Activated B cell treated with CpG ODN at 0.5 μM for 24 hours (primary cell): ENCODE measurements at regions of chr11 and their contacts with region 1.

Region 1: GRCh38 chr11:48109046-48109666 is 107.5 kb upstream of the OR4B1 start:
- DNase-seq: no peak
- ATAC-seq: peak; percentile 6
- H3K4me3 Mint-ChIP-seq: peak overlapping the region; percentile 75
- H3K27ac Mint-ChIP-seq: peak overlapping the region; percentile 88
- H3K4me1 Mint-ChIP-seq: peaks cover 77% of the 10 kb centered on the region
- H3K27me3 Mint-ChIP-seq: no peaks in the 10 kb centered on the region
- CTCF ChIP-seq: no peak

Region 2: DNA sequence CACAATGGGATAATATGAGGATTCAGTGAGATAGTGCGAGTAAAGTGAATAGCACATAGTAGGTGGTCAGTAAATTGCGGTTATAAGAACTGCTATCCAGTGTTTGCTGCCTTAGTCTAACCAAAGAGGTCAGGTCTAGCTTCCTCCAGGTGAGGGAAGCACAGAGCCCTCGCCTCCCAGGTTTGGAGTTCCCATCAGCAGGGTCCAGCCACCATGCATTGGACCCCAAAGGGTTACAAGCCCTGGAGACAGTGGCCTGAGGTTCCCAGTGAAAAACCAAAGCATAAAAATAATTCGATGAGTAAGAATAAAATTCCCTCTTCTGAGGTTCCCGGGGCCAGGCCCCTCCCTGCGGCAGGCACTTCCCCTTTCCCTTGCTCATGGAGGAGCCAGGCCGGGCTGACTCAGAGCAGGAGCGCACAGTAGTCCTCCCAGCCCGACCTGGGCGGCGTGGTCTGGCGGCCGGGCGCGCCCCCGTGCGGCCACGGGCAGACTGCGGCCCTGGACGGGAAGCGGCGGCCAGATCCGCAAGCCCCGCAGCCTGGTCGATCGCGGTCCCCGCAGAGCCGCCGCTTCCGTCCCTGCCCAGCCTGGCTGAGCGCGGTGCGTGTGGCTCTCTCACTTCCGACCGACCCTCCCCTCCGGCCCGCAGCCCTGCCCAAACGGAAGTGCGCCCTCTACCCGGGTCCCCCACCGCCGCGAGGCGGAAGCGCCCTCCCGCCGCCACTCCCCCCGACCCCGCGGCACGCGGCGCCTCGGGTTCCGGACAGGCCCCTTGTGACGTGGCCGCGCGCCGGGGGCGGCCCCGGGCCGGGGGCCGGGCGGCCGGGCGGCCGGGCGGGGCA is 701.2 kb before region 1 on chr11 and contains the start of gene SLC39A13:
- CTCF ChIA-PET with region 1: no interaction called
- POLR2A ChIA-PET with region 1: no interaction called
- intact Hi-C with region 1: loop called (anchors 2 kb)
- DNase-seq: peak; percentile 98
- ATAC-seq: peak; percentile 85
- H3K4me3 Mint-ChIP-seq: peak within 1 kb of the TSS; percentile 90
- H3K27ac Mint-ChIP-seq: peak within 1 kb of the TSS; percentile 95
- H3K4me1 Mint-ChIP-seq: peaks cover 24% of the 10 kb centered on the region
- H3K27me3 Mint-ChIP-seq: no peaks in the 10 kb centered on the region
- CTCF ChIP-seq: no peak
- total RNA-seq, gene SLC39A13: 27.5 and 28.2 TPM in 2 replicates

Region 3: GRCh38 chr11:47642099-47642855 is 466.9 kb before region 1 on chr11 and contains the start of gene MTCH2:
- CTCF ChIA-PET with region 1: no interaction called
- POLR2A ChIA-PET with region 1: no interaction called
- intact Hi-C with region 1: loop called (anchors 1 kb)
- DNase-seq: peak; percentile 95
- ATAC-seq: peak; percentile 94
- H3K4me3 Mint-ChIP-seq: peak within 1 kb of the TSS; percentile 94
- H3K27ac Mint-ChIP-seq: peak within 1 kb of the TSS; percentile 95
- H3K4me1 Mint-ChIP-seq: peaks cover 25% of the 10 kb centered on the region
- H3K27me3 Mint-ChIP-seq: no peaks in the 10 kb centered on the region
- CTCF ChIP-seq: no peak
- total RNA-seq, gene MTCH2: 73.3 and 81.7 TPM in 2 replicates

Region 4: GRCh38 chr11:47858169-47858543 is 251.0 kb before region 1 on chr11:
- CTCF ChIA-PET with region 1: interaction called, 30 read pairs
- POLR2A ChIA-PET with region 1: interaction called, 24 read pairs
- intact Hi-C with region 1: loop called (anchors 1 kb)
- DNase-seq: no peak
- ATAC-seq: no peak
- H3K4me3 Mint-ChIP-seq: peak overlapping the region; percentile 66
- H3K27ac Mint-ChIP-seq: peak overlapping the region; percentile 95
- H3K4me1 Mint-ChIP-seq: peaks cover 89% of the 10 kb centered on the region
- H3K27me3 Mint-ChIP-seq: no peaks in the 10 kb centered on the region
- CTCF ChIP-seq: no peak

Region 5: GRCh38 chr11:47941907-47942558 is 167.1 kb before region 1 on chr11:
- CTCF ChIA-PET with region 1: interaction called, 159 read pairs
- POLR2A ChIA-PET with region 1: interaction called, 55 read pairs
- intact Hi-C with region 1: no loop called
- DNase-seq: no peak
- ATAC-seq: no peak
- H3K4me3 Mint-ChIP-seq: no peak overlapping the region
- H3K27ac Mint-ChIP-seq: no peak overlapping the region
- H3K4me1 Mint-ChIP-seq: peaks cover 23% of the 10 kb centered on the region
- H3K27me3 Mint-ChIP-seq: no peaks in the 10 kb centered on the region
- CTCF ChIP-seq: no peak

Region 6: GRCh38 chr11:47971501-47971900 is 137.7 kb before region 1 on chr11:
- CTCF ChIA-PET with region 1: no interaction called
- POLR2A ChIA-PET with region 1: no interaction called
- intact Hi-C with region 1: no loop called
- DNase-seq: no peak
- ATAC-seq: no peak
- H3K4me3 Mint-ChIP-seq: no peak overlapping the region
- H3K27ac Mint-ChIP-seq: no peak overlapping the region
- H3K4me1 Mint-ChIP-seq: peaks cover 15% of the 10 kb centered on the region
- H3K27me3 Mint-ChIP-seq: no peaks in the 10 kb centered on the region
- CTCF ChIP-seq: no peak

Region 7: GRCh38 chr11:48013269-48013901 is 95.8 kb before region 1 on chr11:
- CTCF ChIA-PET with region 1: no interaction called
- POLR2A ChIA-PET with region 1: interaction called, 26 read pairs
- intact Hi-C with region 1: loop called (anchors 2 kb)
- DNase-seq: peak; percentile 48
- ATAC-seq: peak; percentile 88
- H3K4me3 Mint-ChIP-seq: peak overlapping the region; percentile 51
- H3K27ac Mint-ChIP-seq: peak overlapping the region; percentile 90
- H3K4me1 Mint-ChIP-seq: peaks cover 70% of the 10 kb centered on the region
- H3K27me3 Mint-ChIP-seq: no peaks in the 10 kb centered on the region
- CTCF ChIP-seq: no peak

Region 8: DNA sequence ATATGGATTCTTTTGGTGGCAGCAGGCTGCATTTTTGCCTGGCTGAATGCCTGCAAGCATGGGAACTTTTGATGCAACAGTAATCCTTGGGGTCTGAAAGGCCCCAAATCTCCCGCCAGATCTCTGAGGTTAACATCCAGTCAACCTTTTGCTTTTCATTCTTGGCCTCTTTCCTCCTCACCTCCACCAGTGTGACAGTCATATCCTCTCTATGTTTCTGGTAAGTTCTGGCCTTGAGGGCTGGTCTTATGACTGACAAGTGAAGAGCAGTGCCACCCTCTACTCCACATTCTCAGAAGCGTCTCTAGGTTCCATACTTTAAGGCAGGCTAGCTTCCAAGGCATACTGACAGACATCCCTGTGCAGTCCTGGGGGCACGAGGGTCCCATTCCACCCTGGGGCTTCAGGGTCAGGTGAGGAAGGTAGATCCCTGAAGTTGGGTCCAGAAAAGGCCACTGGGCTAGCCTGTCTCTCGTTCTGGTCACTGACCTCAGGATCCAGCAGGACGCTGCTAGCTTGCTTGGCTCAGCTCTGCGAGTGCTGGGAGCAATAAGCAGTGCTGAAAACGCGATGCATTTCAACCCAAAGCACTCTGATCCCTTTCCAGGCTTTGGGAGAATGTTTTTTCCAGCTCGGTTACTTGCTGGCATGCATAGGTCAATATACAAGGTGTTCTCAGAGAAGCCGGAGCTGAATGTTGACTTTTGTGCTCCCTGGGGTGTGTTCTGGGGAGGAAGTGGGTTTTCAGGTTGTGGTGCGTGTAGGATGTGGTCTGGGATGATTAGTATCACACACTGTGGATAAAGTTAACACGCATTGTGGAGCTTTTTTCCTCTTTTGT is 53.6 kb before region 1 on chr11:
- CTCF ChIA-PET with region 1: interaction called, 4 read pairs
- POLR2A ChIA-PET with region 1: interaction called, 12 read pairs
- intact Hi-C with region 1: loop called (anchors 2 kb)
- DNase-seq: no peak
- ATAC-seq: peak; percentile 77
- H3K4me3 Mint-ChIP-seq: peak overlapping the region; percentile 64
- H3K27ac Mint-ChIP-seq: no peak overlapping the region
- H3K4me1 Mint-ChIP-seq: peaks cover 83% of the 10 kb centered on the region
- H3K27me3 Mint-ChIP-seq: no peaks in the 10 kb centered on the region
- CTCF ChIP-seq: no peak

Region 9: DNA sequence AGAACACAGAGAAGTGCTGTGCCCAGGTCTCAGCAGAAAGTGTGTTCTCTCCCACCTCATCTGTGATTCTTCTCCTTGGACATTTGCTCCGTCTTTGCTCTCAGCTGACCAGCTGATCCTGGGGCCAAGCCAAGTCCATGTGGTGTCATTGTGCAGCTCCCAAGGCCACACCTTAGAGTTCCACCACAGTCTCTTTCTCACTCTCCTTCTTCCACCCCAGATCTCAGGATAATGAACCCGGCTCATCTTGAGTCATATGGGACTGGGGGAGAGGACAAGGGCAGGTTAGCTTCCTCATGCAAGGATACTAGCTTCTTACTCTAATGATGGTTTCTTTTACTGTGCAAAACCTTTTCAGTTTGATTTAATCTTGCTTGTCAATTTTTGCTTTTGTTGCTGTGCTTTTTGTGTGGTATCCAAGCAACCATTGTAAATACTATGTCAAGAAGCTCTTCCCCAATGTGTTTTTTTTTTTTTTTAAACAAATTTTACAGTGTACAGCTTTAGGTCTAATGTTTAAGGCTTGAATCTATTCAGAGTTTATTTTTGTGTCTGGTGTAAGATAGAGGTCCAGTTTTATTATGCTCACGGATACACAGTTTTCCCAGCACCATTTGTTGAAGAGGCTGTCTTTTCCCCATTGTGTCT is 32.4 kb after region 1 on chr11:
- CTCF ChIA-PET with region 1: no interaction called
- POLR2A ChIA-PET with region 1: no interaction called
- intact Hi-C with region 1: no loop called
- DNase-seq: no peak
- ATAC-seq: no peak
- H3K4me3 Mint-ChIP-seq: no peak overlapping the region
- H3K27ac Mint-ChIP-seq: no peak overlapping the region
- H3K4me1 Mint-ChIP-seq: no peaks in the 10 kb centered on the region
- H3K27me3 Mint-ChIP-seq: no peaks in the 10 kb centered on the region
- CTCF ChIP-seq: no peak